ENCODE measurements at regions of chr6 and their contacts with region 1.

Region 1: GRCh38 chr6:25263657-25264056 is 15.5 kb upstream of the CARMIL1 start:
- DNase-seq: no peak
- H3K4me3 ChIP-seq: no peak overlapping the region
- H3K27ac ChIP-seq: no peak overlapping the region
- H3K27me3 ChIP-seq: no peaks in the 10 kb centered on the region
- CTCF ChIP-seq: no peak

Region 2: GRCh38 chr6:25232479-25232878 is 31.2 kb before region 1 on chr6:
- CTCF ChIA-PET with region 1: interaction called, 24 read pairs
- POLR2A ChIA-PET with region 1: no interaction called
- DNase-seq: no peak
- H3K4me3 ChIP-seq: no peak overlapping the region
- H3K27ac ChIP-seq: no peak overlapping the region
- H3K27me3 ChIP-seq: no peaks in the 10 kb centered on the region
- CTCF ChIP-seq: no peak

Region 3: DNA sequence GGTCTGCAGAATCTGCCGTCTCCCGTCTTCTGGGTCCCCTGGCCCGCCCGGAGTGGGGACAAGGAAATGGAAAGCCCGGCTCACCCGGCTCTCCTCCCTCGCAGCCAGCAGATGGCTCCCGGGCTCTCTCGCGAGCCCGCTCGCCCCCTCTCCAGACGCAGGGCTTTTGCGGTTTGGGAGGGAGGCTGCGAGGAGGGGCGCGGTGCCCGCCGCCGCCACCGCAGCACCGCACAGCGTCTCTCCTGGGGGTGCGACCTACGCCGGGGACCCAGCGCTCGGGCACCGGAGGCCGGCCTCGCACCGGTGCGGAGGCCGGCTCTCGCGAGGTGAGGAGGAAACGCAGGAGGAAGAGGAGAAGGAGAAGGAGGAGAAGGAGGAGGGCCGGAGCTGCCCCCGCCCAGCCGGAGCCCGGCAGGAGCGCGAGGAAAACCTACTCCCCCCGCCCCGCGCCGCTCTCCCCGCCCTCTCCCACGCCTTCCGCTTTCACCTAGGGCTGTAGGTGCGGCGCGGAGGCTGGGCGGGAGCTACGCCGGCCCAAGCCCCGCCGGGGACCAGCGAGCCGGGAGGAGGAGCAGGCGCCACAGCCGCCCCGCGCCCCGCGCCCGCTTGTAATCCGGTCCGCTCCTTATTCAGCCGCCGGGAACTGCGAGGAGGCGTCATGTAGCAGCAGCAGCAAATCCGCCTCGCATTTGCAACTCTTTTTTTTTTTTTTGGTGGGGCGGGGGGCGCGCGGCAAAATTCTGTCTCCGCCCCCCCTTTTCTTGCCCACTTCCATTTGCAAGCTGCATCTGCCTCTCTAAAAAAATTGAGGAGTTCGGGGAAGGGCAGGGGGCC is 15.5 kb after region 1 on chr6 and contains the start of gene CARMIL1:
- CTCF ChIA-PET with region 1: interaction called, 97 read pairs
- POLR2A ChIA-PET with region 1: no interaction called
- DNase-seq: no peak
- H3K4me3 ChIP-seq: peak within 1 kb of the TSS; percentile 68
- H3K27ac ChIP-seq: no peak within 1 kb of the TSS
- H3K27me3 ChIP-seq: peaks cover 12% of the 10 kb centered on the region
- CTCF ChIP-seq: peak; percentile 67
- polyA plus RNA-seq, gene CARMIL1: 0.41 and 0.55 TPM in 2 replicates

Region 4: GRCh38 chr6:25490018-25490801 is 226.6 kb after region 1 on chr6:
- CTCF ChIA-PET with region 1: interaction called, 189 read pairs
- POLR2A ChIA-PET with region 1: no interaction called
- DNase-seq: peak; percentile 47
- H3K4me3 ChIP-seq: no peak overlapping the region
- H3K27ac ChIP-seq: no peak overlapping the region
- H3K27me3 ChIP-seq: no peaks in the 10 kb centered on the region
- CTCF ChIP-seq: peak; percentile 91

Region 5: DNA sequence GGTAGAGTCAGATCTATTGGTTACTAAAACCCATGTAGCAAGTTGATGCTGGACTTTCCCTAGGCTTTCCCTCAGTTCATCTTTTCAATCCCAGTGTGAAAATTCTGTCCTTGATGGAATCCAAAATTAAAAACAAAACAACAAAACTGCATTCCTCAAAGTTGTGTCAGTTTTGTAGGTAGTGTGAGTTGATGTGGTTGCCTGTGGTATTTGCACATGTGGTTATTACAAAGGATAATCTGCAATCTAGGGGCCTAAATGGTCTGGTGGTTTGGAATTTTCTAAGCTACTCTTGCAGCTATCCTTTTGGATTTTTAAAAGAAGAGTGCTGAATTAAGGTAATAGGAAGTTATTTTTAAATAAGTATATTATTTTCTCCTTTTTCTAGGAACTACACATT is 256.2 kb after region 1 on chr6:
- CTCF ChIA-PET with region 1: interaction called, 12 read pairs
- POLR2A ChIA-PET with region 1: no interaction called
- DNase-seq: no peak
- H3K4me3 ChIP-seq: no peak overlapping the region
- H3K27ac ChIP-seq: no peak overlapping the region
- H3K27me3 ChIP-seq: no peaks in the 10 kb centered on the region
- CTCF ChIP-seq: no peak

Region 6: DNA sequence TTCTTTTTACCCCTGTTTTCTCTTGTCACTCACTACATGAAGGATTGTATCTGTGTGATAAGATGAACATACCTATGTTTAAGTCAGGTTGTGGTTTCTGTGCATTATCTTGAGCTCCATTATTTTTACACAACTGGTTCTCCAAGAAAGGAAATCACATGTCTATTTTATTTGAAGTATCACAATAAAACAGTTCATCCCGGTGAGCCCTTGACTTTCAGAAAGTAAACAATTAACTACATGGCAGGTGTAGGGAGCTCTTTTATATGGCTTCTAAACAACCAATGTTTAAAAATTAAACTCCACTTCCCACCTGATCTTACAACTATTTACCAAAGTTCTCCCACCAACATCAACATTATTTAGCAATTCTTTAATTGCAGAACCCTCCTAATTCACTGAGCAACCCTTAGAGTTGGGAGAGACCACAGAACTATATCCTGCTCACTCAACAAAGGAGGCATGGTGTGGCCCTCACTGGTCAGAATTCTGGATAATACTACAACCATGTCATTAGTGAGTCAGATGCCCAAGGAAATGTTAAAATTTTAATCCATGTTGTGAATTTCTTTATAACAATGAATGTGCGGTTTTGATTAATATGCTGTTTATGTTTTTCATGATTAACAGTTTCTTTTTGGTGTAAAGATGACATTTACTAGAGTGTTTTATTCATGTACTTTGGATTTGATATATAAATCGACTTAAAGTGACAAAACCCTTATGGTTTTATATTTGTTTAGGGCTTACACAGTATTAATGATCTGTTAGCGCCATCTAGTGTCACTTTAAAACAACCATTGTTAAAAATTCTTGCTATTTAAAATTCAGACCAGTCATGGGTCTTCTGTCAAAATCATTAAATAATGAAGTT is 338.4 kb after region 1 on chr6:
- CTCF ChIA-PET with region 1: interaction called, 24 read pairs
- POLR2A ChIA-PET with region 1: no interaction called
- DNase-seq: peak; percentile 15
- H3K4me3 ChIP-seq: no peak overlapping the region
- H3K27ac ChIP-seq: no peak overlapping the region
- H3K27me3 ChIP-seq: no peaks in the 10 kb centered on the region
- CTCF ChIP-seq: peak; percentile 55